Activated CD4-positive, alpha-beta memory T cell treated with anti-CD3 and anti-CD28 coated beads for 36 hours (primary cell): ENCODE measurements at regions of chr5 and their contacts with region 1.

Region 1: DNA sequence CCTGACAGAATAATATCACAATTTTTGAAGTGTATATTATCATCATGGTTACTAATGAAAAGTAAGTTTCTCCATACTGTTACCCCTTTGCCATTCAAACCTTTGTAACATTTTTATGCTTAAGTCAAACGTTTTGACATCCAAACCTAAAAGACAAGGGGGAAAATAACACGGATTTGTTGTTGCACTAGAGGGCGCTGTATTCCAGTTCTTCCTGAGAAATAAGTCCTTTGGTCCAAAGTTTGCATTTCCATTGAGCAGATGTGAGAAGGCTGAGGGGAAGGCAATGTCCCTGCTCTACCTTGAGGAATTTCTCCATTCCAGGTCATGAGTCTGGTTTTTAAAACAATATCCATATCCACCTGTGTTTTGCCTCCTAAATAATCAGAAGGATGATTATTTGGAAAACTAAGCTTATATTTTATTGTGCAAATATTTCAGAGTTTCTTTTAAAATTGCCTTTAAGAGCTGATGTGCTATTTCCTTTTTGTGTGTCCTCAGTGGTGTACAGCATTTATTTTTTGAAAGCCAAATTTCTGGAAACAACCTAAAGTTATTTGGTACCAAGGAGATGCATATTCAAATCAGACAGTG is 9.7 kb downstream of the LECT2 start:
- DNase-seq: peak; percentile 19
- H3K4me3 Mint-ChIP-seq: no peak overlapping the region
- H3K27ac Mint-ChIP-seq: no peak overlapping the region
- H3K4me1 Mint-ChIP-seq: no peaks in the 10 kb centered on the region
- H3K27me3 Mint-ChIP-seq: peaks cover 14% of the 10 kb centered on the region

Region 2: DNA sequence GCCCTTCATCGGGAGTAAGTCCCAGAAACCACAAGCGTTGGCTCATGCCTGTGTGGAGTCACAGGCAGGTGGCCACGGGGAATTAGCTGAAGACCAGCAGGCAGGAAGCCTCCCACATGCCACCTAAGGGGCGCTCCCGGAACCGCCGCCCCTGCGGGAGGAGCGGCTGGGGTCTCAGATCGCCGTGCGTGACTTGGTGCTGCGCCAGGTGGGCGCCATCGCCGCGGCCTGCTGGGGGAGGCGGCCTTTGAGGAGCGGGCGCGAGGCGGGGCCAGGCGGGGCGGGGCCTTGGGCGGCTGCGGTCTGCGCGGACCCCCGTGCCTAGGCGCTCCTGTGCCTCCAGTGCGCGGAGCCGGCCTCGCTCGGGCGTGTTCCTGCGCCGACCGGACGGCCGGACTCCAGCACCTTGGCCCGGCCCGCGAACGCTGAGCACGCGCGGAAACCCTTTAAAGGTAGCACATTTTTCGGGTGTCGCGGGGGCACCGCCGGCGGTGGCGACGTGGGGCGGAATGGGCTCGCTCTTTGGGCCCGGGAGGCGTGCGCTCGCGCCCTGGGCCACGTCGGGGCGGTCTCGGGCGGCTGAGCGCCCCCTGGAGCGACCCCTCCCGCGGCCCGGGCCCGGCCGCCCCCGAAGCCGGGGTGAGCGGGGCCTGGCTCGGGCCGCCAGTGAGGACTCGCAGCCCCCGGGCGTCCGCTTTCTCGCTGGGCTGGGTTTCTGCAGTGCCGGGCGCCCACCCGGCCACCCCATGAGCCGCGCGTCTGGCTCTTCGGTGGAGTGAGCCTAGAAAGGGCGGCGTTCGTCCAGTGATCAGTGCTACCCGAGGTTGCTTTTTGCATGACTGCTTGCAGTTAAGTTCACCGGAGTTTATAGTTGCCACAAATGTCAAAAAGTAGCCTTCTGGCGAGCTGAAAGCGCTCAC is 14.8 kb before region 1 on chr5:
- CTCF ChIA-PET with region 1: interaction called, 15 read pairs
- POLR2A ChIA-PET with region 1: no interaction called
- intact Hi-C with region 1: no loop called
- DNase-seq: no peak
- H3K4me3 Mint-ChIP-seq: no peak overlapping the region
- H3K27ac Mint-ChIP-seq: no peak overlapping the region
- H3K4me1 Mint-ChIP-seq: peaks cover 3% of the 10 kb centered on the region
- H3K27me3 Mint-ChIP-seq: peaks cover 47% of the 10 kb centered on the region

Region 3: GRCh38 chr5:136062366-136063274 is 117.6 kb after region 1 on chr5:
- CTCF ChIA-PET with region 1: interaction called, 25 read pairs
- POLR2A ChIA-PET with region 1: no interaction called
- intact Hi-C with region 1: loop called (anchors 1 kb)
- DNase-seq: peak; percentile 29
- H3K4me3 Mint-ChIP-seq: no peak overlapping the region
- H3K27ac Mint-ChIP-seq: no peak overlapping the region
- H3K4me1 Mint-ChIP-seq: no peaks in the 10 kb centered on the region
- H3K27me3 Mint-ChIP-seq: no peaks in the 10 kb centered on the region

Region 4: GRCh38 chr5:136174021-136174659 is 229.1 kb after region 1 on chr5:
- CTCF ChIA-PET with region 1: interaction called, 8 read pairs
- POLR2A ChIA-PET with region 1: no interaction called
- intact Hi-C with region 1: loop called (anchors 5 kb)
- DNase-seq: no peak
- H3K4me3 Mint-ChIP-seq: no peak overlapping the region
- H3K27ac Mint-ChIP-seq: no peak overlapping the region
- H3K4me1 Mint-ChIP-seq: no peaks in the 10 kb centered on the region
- H3K27me3 Mint-ChIP-seq: no peaks in the 10 kb centered on the region

Region 5: DNA sequence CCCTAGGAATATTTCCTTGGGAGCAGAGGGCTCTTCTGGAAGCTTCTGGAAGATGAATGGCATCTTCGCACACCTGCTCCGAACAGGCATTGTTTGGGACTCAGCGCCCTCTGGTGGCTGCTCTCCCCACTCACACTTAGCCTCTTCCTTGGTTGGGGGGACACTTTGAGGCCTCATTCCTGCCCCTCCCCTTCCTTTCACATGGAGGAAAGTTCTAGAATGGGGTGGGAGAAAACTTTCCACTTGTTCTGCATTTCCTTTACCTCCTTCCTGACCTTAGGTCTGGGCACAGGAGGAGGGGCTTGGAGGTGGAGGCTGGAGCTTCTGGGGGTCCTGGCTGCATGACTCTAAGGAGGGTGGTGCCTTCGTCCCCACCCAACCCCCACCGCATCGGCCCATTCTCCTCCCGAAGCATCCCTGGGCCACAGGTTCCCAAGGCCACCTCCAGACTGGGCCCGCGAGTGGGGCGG is 267.2 kb after region 1 on chr5:
- CTCF ChIA-PET with region 1: interaction called, 10 read pairs
- POLR2A ChIA-PET with region 1: no interaction called
- intact Hi-C with region 1: loop called (anchors 2 kb)
- DNase-seq: peak; percentile 56
- H3K4me3 Mint-ChIP-seq: no peak overlapping the region
- H3K27ac Mint-ChIP-seq: no peak overlapping the region
- H3K4me1 Mint-ChIP-seq: no peaks in the 10 kb centered on the region
- H3K27me3 Mint-ChIP-seq: peaks cover 16% of the 10 kb centered on the region